ENCODE measurements at regions of chr7 and their contacts with region 1.

Region 1: DNA sequence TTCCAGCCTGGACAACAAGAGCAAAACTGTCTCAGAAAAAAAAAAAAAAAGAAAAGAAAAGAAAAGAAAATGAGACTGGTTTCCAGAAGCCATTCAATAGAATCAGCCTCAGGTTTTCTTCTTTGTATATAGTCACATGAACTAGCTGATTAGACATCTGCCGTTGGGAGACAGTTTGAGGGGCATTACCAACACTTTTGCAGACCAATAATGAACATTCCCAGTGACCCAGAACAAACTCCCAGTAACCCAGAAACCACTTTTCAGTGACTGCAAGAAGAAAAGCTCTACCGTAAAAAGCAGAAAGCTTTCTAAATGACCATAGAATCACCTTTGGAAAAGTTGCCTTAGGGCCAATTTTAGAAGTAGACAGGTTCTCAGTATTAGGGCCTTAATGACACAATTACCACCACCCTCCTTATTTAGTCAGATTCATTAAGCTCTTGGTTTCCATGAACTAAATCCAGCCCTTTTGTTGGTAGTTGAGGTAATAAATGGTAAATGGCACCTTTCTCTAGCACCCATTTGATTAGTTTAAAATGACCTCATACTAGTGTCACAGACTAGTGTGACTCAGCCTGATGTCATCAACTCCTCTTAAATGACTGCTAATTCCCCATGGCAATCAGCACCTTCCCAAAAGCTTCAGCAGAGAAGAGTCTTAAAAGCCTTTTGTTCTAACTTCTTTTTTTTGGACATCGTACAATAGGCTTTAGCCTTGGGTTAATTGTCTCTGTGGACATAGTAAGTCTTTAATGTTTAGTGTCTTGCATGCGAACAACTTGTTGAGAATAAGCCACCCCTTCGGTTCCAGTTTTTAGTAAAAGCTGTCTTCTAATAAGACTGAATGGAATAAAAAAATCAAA is 33.6 kb upstream of the XRCC2 start:
- DNase-seq: no peak
- H3K4me3 ChIP-seq: no peak overlapping the region
- H3K27ac ChIP-seq: no peak overlapping the region
- H3K4me1 ChIP-seq: no peaks in the 10 kb centered on the region
- H3K27me3 ChIP-seq: peaks cover 0 to 8% of the 10 kb centered on the region in 2 donors
- CTCF ChIP-seq: no peak

Region 2: GRCh38 chr7:152336754-152337368 is 372.7 kb before region 1 on chr7:
- intact Hi-C with region 1: loop called (anchors 5 kb)
- DNase-seq: peak in 1 of 2 donors; percentile 25
- H3K4me3 ChIP-seq: no peak overlapping the region
- H3K27ac ChIP-seq: no peak overlapping the region
- H3K4me1 ChIP-seq: peaks cover 0 to 67% (median 24%) of the 10 kb centered on the region in 4 donors
- H3K27me3 ChIP-seq: no peaks in the 10 kb centered on the region
- CTCF ChIP-seq: peak; percentile 43 to 50

Region 3: DNA sequence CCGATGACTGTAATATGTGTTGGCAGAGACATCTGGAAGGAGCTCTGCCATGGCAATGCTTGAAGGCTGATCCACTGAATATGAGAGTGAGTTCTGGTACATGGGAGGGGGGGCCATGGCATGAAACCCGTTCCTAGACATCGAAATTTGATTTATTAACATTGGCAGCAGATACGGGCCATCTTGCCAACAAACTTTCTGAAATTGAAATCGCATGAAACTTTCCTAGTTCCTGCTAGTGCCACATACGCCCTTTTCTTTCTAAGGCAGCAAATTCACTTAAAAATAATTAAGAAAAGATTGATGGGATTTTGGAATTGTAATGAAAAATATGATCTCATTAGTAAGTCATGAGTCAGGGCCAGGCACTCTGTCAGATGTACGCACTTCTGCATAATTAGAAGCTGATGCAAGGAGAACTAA is 181.9 kb before region 1 on chr7:
- intact Hi-C with region 1: no loop called
- DNase-seq: no peak
- H3K4me3 ChIP-seq: no peak overlapping the region
- H3K27ac ChIP-seq: no peak overlapping the region
- H3K4me1 ChIP-seq: peaks cover 0 to 15% (median 11%) of the 10 kb centered on the region in 4 donors
- H3K27me3 ChIP-seq: peaks cover 0 to 6% of the 10 kb centered on the region in 2 donors
- CTCF ChIP-seq: no peak

Measured in tibial artery (tissue), 4 donors.